Mucosa of descending colon (tissue), 3 donors: ENCODE measurements at regions of chr9 and their contacts with region 1.

Region 1: GRCh38 chr9:92342825-92343488 is 17.2 kb downstream of the CENPP start:
- DNase-seq: no peak
- ATAC-seq: no peak
- H3K4me3 ChIP-seq: no peak overlapping the region
- H3K4me1 ChIP-seq: no peaks in the 10 kb centered on the region
- CTCF ChIP-seq: no peak

Region 2: DNA sequence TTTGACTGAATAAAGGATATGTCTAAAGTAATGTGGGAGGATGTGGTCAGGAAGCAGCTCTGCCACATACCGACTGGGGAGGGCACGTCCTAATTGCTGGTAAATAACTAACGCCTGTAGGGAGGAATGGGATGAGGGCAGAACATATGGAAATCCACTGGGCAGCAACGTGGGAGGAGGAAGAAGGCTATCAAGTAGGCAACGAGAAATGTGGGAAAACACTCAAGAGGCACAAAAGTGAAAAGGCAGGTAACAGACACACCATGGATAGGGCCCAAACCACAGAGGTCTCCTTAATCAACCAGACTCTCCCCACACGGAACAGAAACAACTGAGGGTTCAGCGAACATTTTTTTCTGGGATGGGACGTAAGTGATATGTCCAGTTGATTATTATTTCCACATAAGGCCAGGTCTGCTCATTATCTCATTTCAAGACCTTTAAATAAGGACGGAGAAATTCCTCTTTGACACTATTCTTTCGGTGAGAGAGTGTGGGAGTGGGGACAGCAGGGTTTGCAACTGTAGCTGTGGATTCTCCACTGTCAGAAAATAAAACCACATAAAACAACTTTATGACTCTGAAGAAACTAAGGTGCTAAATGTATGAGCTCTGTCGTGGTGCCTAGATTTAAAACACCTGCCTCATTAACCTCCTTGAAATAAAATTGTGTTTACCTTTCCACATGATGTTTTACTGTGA is 66.5 kb before region 1 on chr9:
- intact Hi-C with region 1: no loop called
- DNase-seq: no peak
- ATAC-seq: no peak
- H3K4me3 ChIP-seq: no peak overlapping the region
- H3K4me1 ChIP-seq: no peaks in the 10 kb centered on the region
- CTCF ChIP-seq: no peak

Region 3: GRCh38 chr9:92634712-92635605 is 292.0 kb after region 1 on chr9:
- intact Hi-C with region 1: loop called in 1 of 2 experiments (anchors 10 kb)
- DNase-seq: peak; percentile 72 to 87 (median 83)
- ATAC-seq: peak; percentile 91
- H3K4me3 ChIP-seq: no peak overlapping the region
- H3K4me1 ChIP-seq: no peaks in the 10 kb centered on the region
- CTCF ChIP-seq: peak; percentile 76